AG04449 (cell line): ENCODE measurements at regions of chr9 and their contacts with region 1.

Region 1: DNA sequence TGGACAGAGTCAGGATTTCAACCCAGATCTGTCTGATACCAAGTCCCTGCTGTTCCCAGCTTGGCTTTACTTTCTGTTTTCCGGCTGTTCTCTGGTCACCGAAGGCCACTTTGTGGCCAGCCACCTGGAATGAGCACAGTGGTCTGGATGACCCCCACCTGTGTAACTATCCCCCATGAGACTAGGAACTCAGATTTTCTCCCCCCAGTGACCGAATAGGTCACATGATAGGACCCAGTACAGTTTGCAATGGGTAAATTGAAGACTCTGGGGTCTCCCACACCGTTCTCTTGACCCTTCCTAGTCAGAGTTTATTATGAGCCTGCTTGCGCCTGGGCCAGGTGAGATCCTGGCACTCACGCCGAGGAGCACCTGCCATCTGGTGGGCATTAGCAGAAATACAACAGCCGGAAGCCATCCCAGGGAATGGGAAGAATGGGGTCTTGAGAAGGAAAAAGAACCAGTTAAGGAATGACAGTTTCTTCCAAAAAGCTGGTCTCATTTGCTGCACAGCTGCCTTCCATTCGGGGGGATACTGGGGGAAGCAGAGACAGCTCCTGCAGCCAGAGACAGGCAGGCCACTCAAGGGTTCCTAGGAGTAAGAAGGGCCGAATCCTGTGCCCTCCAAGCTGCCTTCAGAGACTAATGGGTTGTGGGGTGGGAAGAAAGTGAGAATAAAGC is 7.1 kb downstream of the PHYHD1 start:
- DNase-seq: no peak
- H3K4me3 ChIP-seq: no peak overlapping the region
- CTCF ChIP-seq: peak; percentile 83

Region 2: DNA sequence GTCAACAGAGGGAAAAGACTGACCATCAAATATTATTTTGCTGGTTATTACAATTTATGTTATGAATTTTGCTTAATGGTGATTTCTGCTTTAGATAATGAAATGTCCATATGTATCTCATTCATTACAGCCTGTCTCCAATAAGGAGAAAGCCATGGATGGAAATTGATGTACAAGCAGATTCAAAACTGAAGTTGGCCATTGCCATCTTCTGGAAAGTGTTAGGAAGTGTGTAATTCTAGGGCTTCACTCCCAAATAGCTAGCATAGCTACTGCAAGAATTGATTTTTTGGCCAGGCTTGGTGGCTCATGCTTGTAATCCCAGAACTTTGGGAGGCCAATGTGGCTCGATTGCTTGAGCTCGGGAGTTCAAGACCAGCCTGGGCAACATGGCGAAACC is 317.0 kb before region 1 on chr9:
- CTCF ChIA-PET with region 1: no interaction called
- POLR2A ChIA-PET with region 1: no interaction called
- DNase-seq: no peak
- H3K4me3 ChIP-seq: no peak overlapping the region
- CTCF ChIP-seq: no peak

Region 3: DNA sequence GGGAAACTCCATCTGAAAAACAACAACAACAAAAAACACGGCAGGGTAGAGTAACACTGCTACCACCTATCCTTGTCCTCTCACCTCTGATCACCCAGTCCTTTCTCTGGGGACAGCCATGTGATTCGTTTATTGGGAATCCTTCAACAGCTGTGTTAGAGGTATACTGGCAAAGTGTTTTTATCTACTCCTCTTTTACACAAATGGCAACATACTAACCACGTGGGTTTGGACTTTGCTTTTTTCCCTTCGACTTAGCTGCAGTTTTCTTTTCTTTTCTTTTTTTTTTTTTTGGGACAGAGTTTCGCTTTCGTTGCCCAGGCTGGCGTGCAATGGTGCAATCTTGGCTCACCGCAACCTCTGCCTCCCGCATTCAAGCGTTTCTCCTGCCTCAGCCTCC is 250.1 kb before region 1 on chr9:
- CTCF ChIA-PET with region 1: no interaction called
- POLR2A ChIA-PET with region 1: no interaction called
- DNase-seq: no peak
- H3K4me3 ChIP-seq: no peak overlapping the region
- CTCF ChIP-seq: no peak

Region 4: GRCh38 chr9:128805661-128806060 is 122.2 kb before region 1 on chr9:
- CTCF ChIA-PET with region 1: no interaction called
- POLR2A ChIA-PET with region 1: no interaction called
- DNase-seq: no peak
- H3K4me3 ChIP-seq: no peak overlapping the region
- CTCF ChIP-seq: no peak

Region 5: DNA sequence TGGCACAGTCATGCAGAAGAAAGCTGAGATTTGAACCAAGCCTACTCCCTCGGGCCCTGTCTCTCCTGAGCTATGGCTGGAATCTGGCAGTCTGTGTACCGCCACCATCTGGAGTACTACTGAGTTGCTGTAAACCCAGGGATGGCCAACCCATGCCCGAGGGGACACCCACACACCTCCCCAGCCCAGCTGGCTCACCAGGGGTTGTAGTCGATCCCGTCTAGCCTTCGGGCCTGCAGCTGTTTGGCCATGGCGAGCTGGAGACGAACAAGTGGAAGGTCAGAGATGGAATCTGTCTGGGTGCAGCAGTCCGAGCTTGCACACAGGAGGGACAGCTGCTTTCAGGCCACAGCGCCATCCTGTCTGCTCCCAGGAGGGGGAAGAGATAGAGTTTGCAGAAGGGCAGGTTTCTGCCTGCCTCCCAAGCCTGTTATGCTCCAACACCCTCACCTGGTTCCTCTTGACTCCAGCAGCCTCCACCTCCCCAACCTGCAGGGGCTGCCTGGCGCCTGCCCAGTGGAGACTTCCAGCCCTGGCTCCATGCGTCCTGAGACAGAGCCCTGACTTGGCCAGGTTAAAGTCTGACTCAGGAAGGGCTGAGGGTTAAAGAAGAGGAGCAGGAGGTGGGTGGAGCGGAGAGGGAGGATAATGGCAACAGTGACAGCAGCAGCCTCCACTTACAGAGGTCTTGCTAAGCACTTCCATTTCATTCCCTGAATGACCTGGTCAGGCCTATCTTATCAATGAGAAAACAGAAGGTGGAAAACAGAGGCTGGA is 82.5 kb before region 1 on chr9:
- CTCF ChIA-PET with region 1: interaction called, 16 read pairs
- POLR2A ChIA-PET with region 1: no interaction called
- DNase-seq: no peak
- H3K4me3 ChIP-seq: no peak overlapping the region
- CTCF ChIP-seq: no peak

Region 6: DNA sequence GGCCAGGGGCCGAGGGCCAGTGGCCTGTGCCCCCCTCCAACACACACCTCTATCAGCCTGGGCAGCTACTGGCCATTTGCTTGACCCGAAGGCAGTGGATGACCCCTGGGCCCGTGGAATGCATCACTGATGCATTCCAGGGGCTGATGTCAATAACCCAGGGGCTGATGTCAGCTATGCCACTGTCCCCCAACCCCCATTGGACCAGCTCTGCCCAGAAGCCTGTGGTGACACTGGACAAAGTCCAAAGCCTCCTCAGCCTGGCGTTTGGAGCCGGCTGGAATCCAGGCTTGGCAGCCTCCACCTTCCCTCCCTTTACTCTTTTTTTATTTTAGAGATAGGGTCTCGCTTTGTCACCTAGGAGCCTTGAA is 52.1 kb before region 1 on chr9:
- CTCF ChIA-PET with region 1: interaction called, 17 read pairs
- POLR2A ChIA-PET with region 1: interaction called, 3 read pairs
- DNase-seq: no peak
- H3K4me3 ChIP-seq: no peak overlapping the region
- CTCF ChIP-seq: no peak

Region 7: GRCh38 chr9:128892317-128892921 is 35.5 kb before region 1 on chr9:
- CTCF ChIA-PET with region 1: interaction called, 24 read pairs
- POLR2A ChIA-PET with region 1: no interaction called
- DNase-seq: no peak
- H3K4me3 ChIP-seq: no peak overlapping the region
- CTCF ChIP-seq: no peak

Region 8: GRCh38 chr9:128940271-128940921 is 12.5 kb after region 1 on chr9:
- CTCF ChIA-PET with region 1: interaction called, 48 read pairs
- POLR2A ChIA-PET with region 1: no interaction called
- DNase-seq: no peak
- H3K4me3 ChIP-seq: no peak overlapping the region
- CTCF ChIP-seq: no peak